ENCODE measurements at regions of chr9 and their contacts with region 1.

Region 1: DNA sequence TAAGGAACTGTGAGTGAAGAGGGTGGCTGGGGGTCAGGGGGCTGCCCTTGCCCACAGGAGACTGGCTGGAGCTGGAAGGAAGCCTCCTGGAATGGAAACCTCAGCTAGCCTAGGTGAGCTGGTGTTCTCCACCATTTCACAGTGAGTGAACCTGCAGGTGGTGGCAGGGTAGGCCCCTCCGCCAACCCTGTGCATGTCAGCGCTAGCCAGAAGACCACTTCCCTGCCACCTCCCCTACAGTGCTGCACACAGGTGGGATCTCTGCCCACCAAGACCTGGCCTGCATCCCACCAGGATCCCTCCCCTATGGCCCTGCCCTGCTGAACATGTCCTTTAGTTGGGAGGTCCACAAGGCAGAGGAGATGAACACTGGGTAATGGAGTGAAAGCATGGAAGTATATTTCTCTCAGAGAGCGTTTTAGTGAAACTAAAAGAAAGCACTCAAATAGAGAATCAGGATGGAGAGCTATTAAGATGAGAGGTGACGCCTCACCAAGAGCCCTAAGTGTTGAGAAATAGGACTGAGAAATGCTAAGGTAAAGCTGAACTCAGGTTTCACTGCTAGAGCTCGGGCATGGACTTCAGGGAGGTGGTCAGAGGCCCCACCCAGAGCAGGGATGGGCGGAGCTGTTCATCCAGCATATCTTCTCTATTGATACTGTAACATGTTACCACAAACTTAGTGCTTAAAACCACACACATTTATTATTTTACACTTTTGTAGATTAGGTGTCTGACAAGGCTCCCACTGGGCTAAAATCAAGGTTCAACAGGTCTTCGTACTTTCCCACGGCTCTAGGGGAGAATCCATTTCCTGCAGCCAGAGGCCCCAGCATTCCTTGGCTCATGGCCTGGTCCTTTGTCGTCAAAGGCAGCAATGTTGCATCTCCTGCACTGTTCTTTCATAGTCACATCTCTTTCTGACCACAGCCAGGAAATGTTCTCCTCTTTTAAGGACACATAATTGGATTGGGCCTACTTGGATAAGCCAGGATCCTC is 83.2 kb downstream of the DIRAS2 start:
- DNase-seq: no peak
- ATAC-seq: no peak
- H3K4me3 ChIP-seq: no peak overlapping the region
- H3K27ac ChIP-seq: no peak overlapping the region
- H3K4me1 ChIP-seq: no peaks in the 10 kb centered on the region
- H3K27me3 ChIP-seq: no peaks in the 10 kb centered on the region

Region 2: DNA sequence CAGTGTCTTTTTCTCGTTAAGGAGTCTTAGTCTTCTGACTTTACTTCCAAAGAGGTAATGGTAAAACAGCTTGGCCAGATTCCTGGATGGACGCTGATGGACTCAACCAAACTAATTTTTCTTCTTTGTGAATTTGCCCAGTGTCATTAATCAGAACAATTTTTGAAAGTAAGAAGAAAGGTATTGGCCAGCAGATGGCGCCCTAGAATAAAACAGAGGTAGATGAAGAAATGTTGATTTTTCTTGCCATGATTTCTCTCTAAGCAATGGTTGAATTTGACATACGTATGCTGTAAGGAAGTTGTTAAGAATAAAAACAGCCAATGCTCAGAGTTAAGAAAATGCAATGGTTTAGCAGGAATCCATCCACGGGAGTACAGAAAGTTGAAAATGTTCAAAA is 416.8 kb before region 1 on chr9:
- intact Hi-C with region 1: no loop called
- DNase-seq: peak in 1 of 2 donors; percentile 49
- ATAC-seq: no peak
- H3K4me3 ChIP-seq: no peak overlapping the region
- H3K27ac ChIP-seq: no peak overlapping the region
- H3K4me1 ChIP-seq: no peaks in the 10 kb centered on the region
- H3K27me3 ChIP-seq: no peaks in the 10 kb centered on the region

Region 3: DNA sequence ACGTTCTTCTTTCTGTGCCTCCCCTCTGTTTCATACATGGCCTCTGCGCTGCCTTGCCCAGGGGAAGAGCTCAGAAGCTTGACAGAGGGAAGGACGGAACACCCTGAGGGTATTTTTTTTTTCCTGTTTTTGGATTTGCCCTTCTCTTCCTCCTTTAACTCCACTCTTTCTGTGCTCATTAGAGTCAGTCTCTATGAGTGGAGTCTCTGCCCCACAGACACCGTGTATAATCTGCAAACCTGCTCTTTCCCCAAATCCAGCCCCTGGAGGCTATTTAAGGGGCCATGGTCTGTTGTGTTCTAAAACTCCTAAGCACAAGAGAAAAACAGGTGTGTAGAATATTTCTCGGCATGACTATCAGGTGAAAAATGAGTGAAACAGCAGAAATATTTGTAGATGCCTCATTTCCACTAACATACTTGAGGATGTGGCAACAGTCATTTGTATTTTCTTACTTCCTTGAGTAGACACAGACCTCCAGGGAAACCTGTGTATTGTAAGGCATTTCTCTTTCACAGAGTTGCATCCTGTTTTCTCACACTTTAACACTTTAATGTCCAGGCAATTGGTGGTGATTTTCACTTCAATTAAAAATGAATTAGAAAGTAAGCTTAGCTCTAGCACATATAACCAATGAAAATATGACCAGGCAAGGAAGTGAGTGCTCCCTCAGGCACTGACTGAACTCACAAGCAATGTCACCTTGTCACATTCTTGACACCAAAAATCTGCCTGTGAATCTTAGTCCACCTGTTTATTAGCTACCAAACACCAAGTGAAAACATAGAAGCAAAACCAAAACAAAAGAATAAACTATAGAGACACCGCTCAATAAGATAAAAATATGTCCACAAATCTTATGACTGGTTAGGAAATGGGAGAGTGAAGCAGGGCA is 18.8 kb after region 1 on chr9:
- intact Hi-C with region 1: loop called in 1 of 2 experiments (anchors 1 kb)
- DNase-seq: no peak
- ATAC-seq: no peak
- H3K4me3 ChIP-seq: no peak overlapping the region
- H3K27ac ChIP-seq: no peak overlapping the region
- H3K4me1 ChIP-seq: no peaks in the 10 kb centered on the region
- H3K27me3 ChIP-seq: no peaks in the 10 kb centered on the region

Region 4: DNA sequence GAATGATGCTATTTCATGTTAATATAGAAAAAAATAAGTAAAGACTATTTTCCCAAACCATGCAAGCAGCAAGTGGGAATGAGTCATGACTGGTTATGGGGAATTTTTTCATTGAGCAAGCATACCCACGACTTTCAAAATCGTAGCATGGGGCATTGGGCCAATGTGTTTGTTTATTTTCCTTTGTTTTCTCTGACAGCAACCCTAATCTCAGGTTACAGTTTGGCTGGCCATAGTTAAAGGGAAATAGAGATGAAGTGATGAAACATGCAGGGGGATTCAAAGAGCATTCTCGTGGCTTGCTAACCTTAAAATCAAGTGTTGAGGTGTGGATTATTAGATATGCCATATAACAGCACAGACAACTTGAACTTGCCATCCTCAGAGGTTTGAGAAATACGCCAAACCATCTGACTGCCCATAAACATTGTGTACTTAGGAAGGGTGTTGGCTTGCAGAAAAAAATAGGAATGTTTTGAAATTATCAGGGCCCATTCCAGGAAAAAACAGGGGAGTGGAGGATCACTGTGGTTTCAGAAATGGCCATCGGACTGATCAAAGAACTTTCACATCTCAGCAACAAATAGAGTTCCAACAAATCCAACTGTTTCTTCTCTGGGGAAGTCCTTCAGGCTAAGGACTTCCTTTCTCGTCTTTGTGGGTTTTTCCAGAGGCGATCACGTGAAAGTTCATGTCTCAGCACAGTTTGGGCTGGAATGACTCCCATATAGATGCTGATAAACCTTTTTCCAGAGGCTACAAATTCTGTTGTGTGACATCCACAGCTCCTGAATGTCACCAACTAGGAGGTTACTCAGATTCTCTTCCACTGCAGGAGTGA is 501.3 kb after region 1 on chr9:
- intact Hi-C with region 1: no loop called
- DNase-seq: no peak
- ATAC-seq: peak; percentile 59
- H3K4me3 ChIP-seq: no peak overlapping the region
- H3K27ac ChIP-seq: no peak overlapping the region
- H3K4me1 ChIP-seq: no peaks in the 10 kb centered on the region
- H3K27me3 ChIP-seq: no peaks in the 10 kb centered on the region

Measured in aorta (tissue), 5 donors.